Activated naive CD4-positive, alpha-beta T cell treated with anti-CD3 and anti-CD28 coated beads for 36 hours (primary cell): ENCODE measurements at regions of chr2 and their contacts with region 1.

Region 1: DNA sequence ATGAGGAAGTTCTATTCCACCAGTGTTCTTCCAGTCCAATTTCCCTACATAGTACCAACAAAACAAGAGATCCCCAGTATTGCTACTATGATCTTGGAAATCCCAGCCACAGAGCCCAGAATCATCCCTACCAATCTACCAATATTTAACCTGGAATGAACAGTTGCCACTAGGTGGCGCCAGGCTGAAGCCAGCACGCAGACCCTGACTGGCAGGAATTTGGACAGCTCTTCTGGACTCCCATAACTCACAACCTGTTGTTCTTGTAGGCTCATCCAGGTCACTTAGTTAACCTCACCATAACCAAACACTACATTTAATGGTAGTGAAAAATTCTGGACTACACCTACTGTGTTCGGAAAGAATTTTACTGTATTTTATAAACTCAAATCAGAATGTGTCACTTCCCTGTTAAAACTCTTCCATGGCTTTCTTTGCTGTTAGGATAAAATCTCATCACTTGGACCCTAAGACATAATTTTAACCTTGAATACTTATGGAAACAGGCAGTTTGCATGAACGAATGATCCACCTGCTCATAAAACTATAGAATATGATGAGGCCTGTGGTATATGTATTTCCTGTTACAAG is 59.8 kb upstream of the SLC38A11 start:
- DNase-seq: peak; percentile 74
- H3K4me3 Mint-ChIP-seq: no peak overlapping the region
- H3K27ac Mint-ChIP-seq: no peak overlapping the region
- H3K4me1 Mint-ChIP-seq: no peaks in the 10 kb centered on the region
- H3K27me3 Mint-ChIP-seq: peaks cover 9% of the 10 kb centered on the region

Region 2: DNA sequence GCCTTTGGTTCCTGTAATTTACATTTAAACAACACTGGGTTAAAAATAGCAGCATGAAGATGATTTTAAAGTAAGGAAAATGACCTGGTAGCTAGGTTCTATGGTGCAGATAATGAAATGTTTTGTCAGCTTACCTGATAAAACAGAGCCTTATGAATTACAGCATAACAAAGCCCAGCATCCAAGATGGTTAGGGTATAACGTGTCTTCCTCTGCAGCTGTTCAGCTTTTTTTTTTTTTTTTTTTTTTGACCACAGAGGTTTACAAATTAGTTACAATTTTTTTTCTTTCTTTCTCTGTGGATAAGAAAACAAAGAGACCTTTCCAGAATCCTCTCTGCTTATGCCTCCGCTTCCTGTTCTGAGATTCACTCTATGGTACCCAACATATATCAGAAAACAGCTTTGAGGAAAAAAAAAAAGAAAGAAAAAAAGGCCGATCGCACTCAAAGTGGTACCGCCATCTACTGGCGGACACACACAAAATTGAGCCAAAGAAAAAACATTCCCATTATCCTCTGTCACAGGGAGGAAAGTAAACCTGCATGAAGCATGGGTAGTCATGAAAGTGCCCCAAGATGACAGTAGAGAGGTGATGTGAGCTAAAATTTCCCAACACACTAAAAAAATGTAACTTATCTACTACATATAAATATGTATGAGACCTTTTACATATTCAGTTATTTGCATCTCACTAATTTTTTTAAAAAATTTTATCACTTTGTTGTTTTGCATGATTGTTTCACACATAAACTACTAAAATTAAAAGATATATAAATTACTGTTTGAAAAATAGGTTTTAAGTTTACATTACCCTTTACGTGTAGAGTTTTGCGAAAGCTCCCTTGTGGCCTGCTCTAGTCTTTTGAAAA is 188.8 kb after region 1 on chr2 and contains the start of gene SCN3A:
- CTCF ChIA-PET with region 1: interaction called, 42 read pairs
- intact Hi-C with region 1: loop called (anchors 1 kb)
- DNase-seq: peak; percentile 18
- H3K4me3 Mint-ChIP-seq: peak within 1 kb of the TSS; percentile 11
- H3K27ac Mint-ChIP-seq: no peak within 1 kb of the TSS
- H3K4me1 Mint-ChIP-seq: peaks cover 3% of the 10 kb centered on the region
- H3K27me3 Mint-ChIP-seq: peaks cover 9% of the 10 kb centered on the region
- total RNA-seq, gene SCN3A: 0.10 to 0.12 TPM

Region 3: GRCh38 chr2:165239230-165239629 is 224.1 kb after region 1 on chr2 and contains the start of gene SCN2A:
- CTCF ChIA-PET with region 1: no interaction called
- intact Hi-C with region 1: no loop called
- DNase-seq: no peak
- H3K4me3 Mint-ChIP-seq: no peak within 1 kb of the TSS
- H3K27ac Mint-ChIP-seq: no peak within 1 kb of the TSS
- H3K4me1 Mint-ChIP-seq: no peaks in the 10 kb centered on the region
- H3K27me3 Mint-ChIP-seq: peaks cover 16% of the 10 kb centered on the region
- total RNA-seq, gene SCN2A: 0.10 to 0.14 TPM

Region 4: DNA sequence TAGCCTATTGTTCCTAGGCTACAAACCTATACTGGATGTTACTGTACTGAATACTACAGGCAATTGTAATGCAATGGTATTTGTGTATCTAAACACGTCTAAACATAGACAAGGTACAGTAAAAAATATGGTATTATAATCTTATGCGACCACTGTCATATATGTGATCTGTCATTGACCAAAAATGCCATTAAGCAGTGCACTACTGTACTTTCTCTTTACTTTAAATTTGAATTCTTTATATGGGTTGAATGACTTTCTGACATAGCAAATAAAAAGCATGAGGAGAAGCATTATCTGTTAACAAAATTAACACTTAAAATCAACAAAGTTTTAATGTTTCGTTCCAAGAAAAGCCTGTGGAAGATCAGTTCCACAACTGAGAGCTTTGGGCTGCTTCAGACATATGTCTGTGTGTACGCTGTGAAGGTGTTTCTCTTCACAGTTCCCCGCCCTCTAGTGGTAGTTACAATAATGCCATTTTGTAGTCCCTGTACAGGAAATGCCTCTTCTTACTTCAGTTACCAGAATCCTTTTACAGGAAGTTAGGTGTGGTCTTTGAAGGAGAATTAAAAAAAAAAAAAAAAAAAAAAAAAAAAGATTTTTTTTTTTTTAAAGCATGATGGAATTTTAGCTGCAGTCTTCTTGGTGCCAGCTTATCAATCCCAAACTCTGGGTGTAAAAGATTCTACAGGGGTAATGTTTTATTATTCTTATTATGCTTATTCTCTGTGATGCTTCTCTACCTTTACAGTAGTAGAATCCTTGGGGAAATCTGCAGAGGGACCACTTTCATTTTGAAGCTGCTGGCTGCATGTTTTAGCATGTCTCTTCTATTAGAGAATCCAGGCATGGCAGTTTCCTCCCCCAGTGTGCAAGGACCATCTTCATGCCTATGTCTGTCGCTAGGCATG is 278.6 kb after region 1 on chr2:
- CTCF ChIA-PET with region 1: no interaction called
- intact Hi-C with region 1: loop called (anchors 1 kb)
- DNase-seq: peak; percentile 52
- H3K4me3 Mint-ChIP-seq: no peak overlapping the region
- H3K27ac Mint-ChIP-seq: no peak overlapping the region
- H3K4me1 Mint-ChIP-seq: peaks cover 5% of the 10 kb centered on the region
- H3K27me3 Mint-ChIP-seq: peaks cover 10% of the 10 kb centered on the region

Region 5: GRCh38 chr2:165305391-165306096 is 290.4 kb after region 1 on chr2:
- CTCF ChIA-PET with region 1: no interaction called
- intact Hi-C with region 1: loop called (anchors 1 kb)
- DNase-seq: no peak
- H3K4me3 Mint-ChIP-seq: no peak overlapping the region
- H3K27ac Mint-ChIP-seq: no peak overlapping the region
- H3K4me1 Mint-ChIP-seq: no peaks in the 10 kb centered on the region
- H3K27me3 Mint-ChIP-seq: no peaks in the 10 kb centered on the region

Region 6: GRCh38 chr2:165698444-165698894 is 683.3 kb after region 1 on chr2:
- CTCF ChIA-PET with region 1: no interaction called
- intact Hi-C with region 1: loop called (anchors 5 kb)
- DNase-seq: peak; percentile 20
- H3K4me3 Mint-ChIP-seq: no peak overlapping the region
- H3K27ac Mint-ChIP-seq: no peak overlapping the region
- H3K4me1 Mint-ChIP-seq: no peaks in the 10 kb centered on the region
- H3K27me3 Mint-ChIP-seq: peaks cover 8% of the 10 kb centered on the region